ENCODE measurements at regions of chr9 and their contacts with region 1.

Region 1: DNA sequence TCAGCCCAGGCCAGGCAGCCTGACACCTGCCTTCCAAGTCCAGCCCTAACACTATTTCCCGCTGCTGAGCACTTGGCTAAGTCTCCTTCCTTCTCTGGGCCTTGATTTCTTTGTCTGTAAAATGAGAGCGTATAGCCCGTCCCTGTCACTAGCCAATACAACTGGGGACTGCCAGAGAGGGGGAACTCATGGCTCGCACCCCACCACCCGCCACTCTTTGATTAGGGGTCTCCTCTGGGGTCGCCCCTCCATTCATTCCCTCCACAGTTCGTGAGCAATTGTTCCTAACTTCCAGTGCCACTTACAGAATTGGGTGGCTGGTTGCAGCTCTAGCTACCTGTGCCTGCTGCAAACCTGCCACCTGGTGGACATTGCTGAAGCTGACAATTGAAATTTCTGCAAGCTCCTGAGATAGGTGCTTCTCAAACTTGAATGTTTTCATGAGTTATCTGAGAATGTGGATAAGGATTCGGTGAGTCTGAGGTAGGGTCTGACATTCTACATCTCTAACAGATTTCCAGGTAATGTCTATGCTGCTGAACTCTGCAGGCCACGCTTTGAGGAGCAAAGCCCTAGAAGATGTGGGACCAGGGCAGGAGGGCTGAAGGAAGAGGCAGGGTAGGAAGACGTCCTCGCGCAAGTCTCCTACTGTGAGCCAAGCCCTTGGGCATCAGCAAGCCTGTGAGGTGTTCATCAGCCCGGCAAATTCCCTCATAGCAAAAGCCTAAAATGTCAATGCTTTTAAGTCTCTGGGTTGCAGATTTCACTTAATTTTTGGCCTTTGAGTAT is 13.3 kb upstream of the RECK start:
- DNase-seq: peak; percentile 59
- ATAC-seq: peak; percentile 97
- H3K4me3 ChIP-seq: no peak overlapping the region
- H3K27ac ChIP-seq: no peak overlapping the region
- H3K4me1 ChIP-seq: no peaks in the 10 kb centered on the region
- H3K27me3 ChIP-seq: no peaks in the 10 kb centered on the region
- CTCF ChIP-seq: peak; percentile 88 to 94 (median 89)
- POLR2A ChIP-seq: no peak
- RAD21 ChIP-seq: peak; percentile 86

Region 2: GRCh38 chr9:34098307-34098706 is 1925.1 kb before region 1 on chr9:
- CTCF ChIA-PET with region 1: no interaction called
- POLR2A ChIA-PET with region 1: no interaction called
- RAD21 ChIA-PET with region 1: no interaction called
- intact Hi-C with region 1: no loop called
- DNase-seq: no peak
- ATAC-seq: no peak
- H3K4me3 ChIP-seq: no peak overlapping the region
- H3K27ac ChIP-seq: no peak overlapping the region
- H3K4me1 ChIP-seq: no peaks in the 10 kb centered on the region
- H3K27me3 ChIP-seq: no peaks in the 10 kb centered on the region
- CTCF ChIP-seq: no peak
- POLR2A ChIP-seq: no peak
- RAD21 ChIP-seq: no peak

Region 3: DNA sequence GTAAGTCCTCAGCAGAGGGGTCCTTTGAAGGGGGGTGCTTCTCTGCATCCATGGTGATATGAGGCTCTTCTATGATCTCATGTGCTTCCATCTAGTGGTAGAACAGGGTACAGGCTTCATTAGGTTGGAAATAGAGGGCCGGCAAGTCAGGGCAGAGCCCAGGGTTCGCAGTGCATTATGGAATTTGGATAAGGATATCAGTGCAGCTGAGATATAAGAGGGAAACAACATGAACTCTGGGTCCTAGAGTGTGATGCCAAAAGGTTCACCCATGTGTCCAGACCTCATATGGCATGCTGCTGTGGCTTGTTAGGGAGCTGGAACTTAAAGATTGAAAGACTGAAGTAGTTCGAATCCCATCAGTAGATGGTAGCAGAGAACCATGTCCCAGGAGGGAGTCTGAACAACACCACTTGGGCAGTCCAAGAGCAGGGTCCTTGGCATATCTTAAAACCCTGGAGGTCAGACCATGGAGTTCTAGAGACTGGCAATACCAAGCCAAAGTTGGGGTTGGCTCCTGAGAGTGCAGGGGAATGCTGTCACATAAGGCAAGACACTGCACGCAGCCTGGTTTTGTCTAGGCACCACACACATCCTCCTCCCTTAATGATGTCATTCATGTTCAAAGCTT is 197.3 kb before region 1 on chr9:
- CTCF ChIA-PET with region 1: interaction called, 10 read pairs
- POLR2A ChIA-PET with region 1: no interaction called
- RAD21 ChIA-PET with region 1: no interaction called
- intact Hi-C with region 1: loop called (anchors 1 kb)
- DNase-seq: peak; percentile 44
- ATAC-seq: peak; percentile 60
- H3K4me3 ChIP-seq: no peak overlapping the region
- H3K27ac ChIP-seq: peak overlapping the region; percentile 5; the same call in 1 of the 2 replicates
- H3K4me1 ChIP-seq: peaks cover 3 to 20% of the 10 kb centered on the region in 2 experiments; a peak in 3 of 4 replicates
- H3K27me3 ChIP-seq: no peaks in the 10 kb centered on the region
- CTCF ChIP-seq: peak; percentile 83 to 95 (median 89)
- POLR2A ChIP-seq: no peak
- RAD21 ChIP-seq: peak; percentile 72

Region 4: DNA sequence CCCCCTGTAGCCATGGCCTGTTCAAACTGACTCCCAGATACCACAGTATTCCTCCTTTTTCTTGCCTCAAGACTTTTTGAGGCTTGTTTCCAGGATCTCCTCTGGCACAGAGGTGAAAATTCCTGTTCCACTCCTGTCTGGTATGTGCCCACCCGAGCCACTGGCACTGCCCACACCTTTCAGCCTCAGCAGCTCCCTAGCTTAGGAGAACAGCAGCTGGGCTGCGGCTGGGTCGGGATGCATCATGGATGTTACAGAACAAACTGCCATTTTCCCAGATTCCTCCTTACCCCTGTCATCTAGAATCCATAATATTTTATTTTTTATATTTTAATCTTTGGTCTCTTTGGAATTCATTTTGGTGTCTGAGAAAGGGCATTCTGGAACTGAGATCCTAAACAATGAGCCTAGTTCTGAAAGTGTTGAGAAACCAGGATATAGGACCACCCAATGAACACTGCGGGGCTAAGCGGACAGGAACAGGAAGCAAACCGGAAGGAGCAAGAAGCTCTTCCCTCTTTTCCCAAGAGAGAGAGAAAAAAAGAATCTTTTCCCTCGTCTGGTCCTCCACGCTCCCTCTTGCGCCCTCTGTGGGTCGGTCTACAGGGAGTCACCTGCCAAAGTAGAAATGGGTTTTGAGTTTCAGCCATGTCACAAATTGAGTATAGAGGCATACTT is 78.0 kb before region 1 on chr9:
- CTCF ChIA-PET with region 1: interaction called, 12 read pairs
- POLR2A ChIA-PET with region 1: no interaction called
- RAD21 ChIA-PET with region 1: no interaction called
- intact Hi-C with region 1: no loop called
- DNase-seq: peak; percentile 81
- ATAC-seq: peak; percentile 89
- H3K4me3 ChIP-seq: peak overlapping the region; percentile 54 to 61
- H3K27ac ChIP-seq: peak overlapping the region; percentile 0; the same call in 1 of the 2 replicates
- H3K4me1 ChIP-seq: peaks cover 9 to 27% of the 10 kb centered on the region in 2 experiments; a peak in 3 of 4 replicates
- H3K27me3 ChIP-seq: no peaks in the 10 kb centered on the region
- CTCF ChIP-seq: peak; percentile 84 to 96 (median 88)
- POLR2A ChIP-seq: peak; percentile 20
- RAD21 ChIP-seq: peak; percentile 63

Region 5: GRCh38 chr9:36008774-36009300 is 14.6 kb before region 1 on chr9:
- CTCF ChIA-PET with region 1: interaction called, 38 read pairs
- POLR2A ChIA-PET with region 1: no interaction called
- RAD21 ChIA-PET with region 1: interaction called, 3 to 7 read pairs
- intact Hi-C with region 1: loop called (anchors 2 kb)
- DNase-seq: peak; percentile 76
- ATAC-seq: peak; percentile 98
- H3K4me3 ChIP-seq: no peak overlapping the region
- H3K27ac ChIP-seq: no peak overlapping the region
- H3K4me1 ChIP-seq: peaks cover 0 to 9% of the 10 kb centered on the region in 2 experiments; a peak in 2 of 4 replicates
- H3K27me3 ChIP-seq: no peaks in the 10 kb centered on the region; the same call in 1 of the 2 replicates
- CTCF ChIP-seq: peak; percentile 100
- POLR2A ChIP-seq: no peak
- RAD21 ChIP-seq: peak; percentile 86

Region 6: GRCh38 chr9:36064448-36065037 is 41.1 kb after region 1 on chr9:
- CTCF ChIA-PET with region 1: no interaction called
- POLR2A ChIA-PET with region 1: no interaction called
- RAD21 ChIA-PET with region 1: no interaction called
- intact Hi-C with region 1: no loop called
- DNase-seq: no peak
- ATAC-seq: no peak
- H3K4me3 ChIP-seq: no peak overlapping the region
- H3K27ac ChIP-seq: no peak overlapping the region
- H3K4me1 ChIP-seq: no peaks in the 10 kb centered on the region
- H3K27me3 ChIP-seq: no peaks in the 10 kb centered on the region
- CTCF ChIP-seq: no peak
- POLR2A ChIP-seq: no peak
- RAD21 ChIP-seq: no peak

Measured in HCT116 (cell line).